Spleen (tissue), 13 donors: ENCODE measurements at regions of chr12 and their contacts with region 1.

Region 1: DNA sequence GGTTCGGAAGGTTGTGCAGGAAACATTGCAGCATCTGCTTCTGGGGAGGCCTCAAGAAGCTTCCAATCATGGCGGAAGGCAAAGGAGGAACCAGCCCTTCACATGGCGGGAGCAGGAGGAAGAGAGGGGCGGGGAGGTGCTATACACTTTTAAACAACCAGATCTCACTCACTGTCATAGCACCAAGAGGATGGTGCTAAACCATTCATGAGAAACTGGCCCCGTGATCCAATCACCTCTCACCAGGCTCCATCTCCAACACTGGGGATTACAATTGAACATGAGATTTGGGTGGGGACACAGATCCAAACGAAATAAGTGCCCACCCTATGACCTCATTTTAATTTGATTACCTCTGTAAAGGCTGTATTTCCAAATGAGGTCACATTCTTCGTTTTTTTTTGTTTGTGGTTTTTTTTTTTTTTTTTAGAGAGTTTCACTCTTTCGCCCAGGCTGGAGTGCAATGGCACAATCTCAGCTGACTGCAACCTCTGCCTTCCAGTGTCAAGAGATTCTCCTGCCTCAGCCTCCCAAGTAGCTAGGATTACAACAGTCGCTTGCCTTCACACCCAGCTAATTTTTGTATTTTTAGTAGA is 11.4 kb upstream of the ORAI1 start:
- DNase-seq: no peak
- H3K4me3 ChIP-seq: no peak overlapping the region
- H3K27ac ChIP-seq: peak overlapping the region in 2 of 8 donors; percentile 9 to 18
- H3K4me1 ChIP-seq: peaks cover 0 to 38% (median 2%) of the 10 kb centered on the region in 6 donors
- H3K27me3 ChIP-seq: no peaks in the 10 kb centered on the region
- CTCF ChIP-seq: no peak
- POLR2A ChIP-seq: no peak

Region 2: GRCh38 chr12:121568971-121569751 is 45.8 kb before region 1 on chr12:
- intact Hi-C with region 1: loop called (anchors 5 kb)
- DNase-seq: no peak
- H3K4me3 ChIP-seq: no peak overlapping the region
- H3K27ac ChIP-seq: peak overlapping the region in 6 of 8 donors; percentile 5 to 59 (median 29)
- H3K4me1 ChIP-seq: peaks cover 0 to 24% (median 3%) of the 10 kb centered on the region in 6 donors
- H3K27me3 ChIP-seq: no peaks in the 10 kb centered on the region
- CTCF ChIP-seq: no peak
- POLR2A ChIP-seq: no peak

Region 3: GRCh38 chr12:122123051-122123760 is 508.2 kb after region 1 on chr12:
- intact Hi-C with region 1: no loop called
- DNase-seq: peak; percentile 78
- H3K4me3 ChIP-seq: peak overlapping the region in 1 of 8 donors; percentile 28
- H3K27ac ChIP-seq: peak overlapping the region in 2 of 8 donors; percentile 18 to 45
- H3K4me1 ChIP-seq: peaks cover 6 to 76% (median 36%) of the 10 kb centered on the region in 6 donors
- H3K27me3 ChIP-seq: no peaks in the 10 kb centered on the region
- CTCF ChIP-seq: peak; percentile 36 to 85 (median 78)
- POLR2A ChIP-seq: no peak